ENCODE measurements at regions of chr17 and their contacts with region 1.

Region 1: GRCh38 chr17:70636517-70637133 is 467.3 kb downstream of the KCNJ2 start:
- DNase-seq: peak; percentile 7 to 23 (median 18)
- H3K4me3 ChIP-seq: no peak overlapping the region
- H3K4me3 Mint-ChIP-seq: no peak overlapping the region
- H3K27ac ChIP-seq: no peak overlapping the region
- H3K27ac Mint-ChIP-seq: no peak overlapping the region
- H3K4me1 ChIP-seq: no peaks in the 10 kb centered on the region
- H3K4me1 Mint-ChIP-seq: no peaks in the 10 kb centered on the region
- H3K27me3 ChIP-seq: peaks cover 0 to 3% of the 10 kb centered on the region in 2 donors
- H3K27me3 Mint-ChIP-seq: peaks cover 2 to 10% (median 8%) of the 10 kb centered on the region in 3 donors
- CTCF ChIP-seq: peak; percentile 88

Region 2: GRCh38 chr17:69575346-69575761 is 1061.3 kb before region 1 on chr17:
- intact Hi-C with region 1: loop called in 1 of 2 experiments (anchors 10 kb)
- DNase-seq: no peak
- H3K4me3 ChIP-seq: no peak overlapping the region
- H3K4me3 Mint-ChIP-seq: no peak overlapping the region
- H3K27ac ChIP-seq: no peak overlapping the region
- H3K27ac Mint-ChIP-seq: no peak overlapping the region
- H3K4me1 ChIP-seq: no peaks in the 10 kb centered on the region
- H3K4me1 Mint-ChIP-seq: no peaks in the 10 kb centered on the region
- H3K27me3 ChIP-seq: no peaks in the 10 kb centered on the region
- H3K27me3 Mint-ChIP-seq: peaks cover 4 to 7% (median 5%) of the 10 kb centered on the region in 3 donors
- CTCF ChIP-seq: no peak

Region 3: GRCh38 chr17:70829876-70830275 is 193.3 kb after region 1 on chr17:
- intact Hi-C with region 1: no loop called
- DNase-seq: no peak
- H3K4me3 ChIP-seq: no peak overlapping the region
- H3K4me3 Mint-ChIP-seq: no peak overlapping the region
- H3K27ac ChIP-seq: no peak overlapping the region
- H3K27ac Mint-ChIP-seq: no peak overlapping the region
- H3K4me1 ChIP-seq: no peaks in the 10 kb centered on the region
- H3K4me1 Mint-ChIP-seq: no peaks in the 10 kb centered on the region
- H3K27me3 ChIP-seq: no peaks in the 10 kb centered on the region
- H3K27me3 Mint-ChIP-seq: peaks cover 0 to 1% (median 0%) of the 10 kb centered on the region in 3 donors
- CTCF ChIP-seq: no peak

Region 4: DNA sequence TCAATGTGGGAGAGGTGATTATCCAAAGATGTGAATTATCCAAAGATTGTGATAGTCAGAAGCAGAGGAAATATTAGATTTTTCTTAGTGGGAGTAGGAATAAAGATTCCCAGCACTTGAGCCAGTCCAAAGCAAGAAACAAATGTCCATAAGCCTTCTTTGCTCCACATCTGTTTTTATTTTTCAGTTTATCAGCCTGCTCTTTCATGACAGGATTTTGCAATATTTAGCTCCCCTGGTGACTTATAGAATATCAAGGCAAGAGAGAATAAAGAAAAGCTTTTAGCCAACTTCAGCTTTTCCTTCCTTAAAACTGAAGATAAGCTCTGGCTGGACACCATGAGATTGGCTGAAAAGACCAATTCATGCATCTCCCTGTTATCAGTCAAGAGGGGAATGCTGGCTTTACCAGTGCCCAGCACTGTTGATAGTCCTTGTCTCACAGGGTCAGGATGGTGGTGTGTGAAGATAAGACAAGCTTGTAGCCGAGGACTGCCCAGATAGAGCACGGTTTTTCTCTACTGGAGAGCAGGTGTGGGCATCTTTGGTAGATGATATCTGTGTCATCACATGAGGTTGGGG is 239.2 kb after region 1 on chr17:
- intact Hi-C with region 1: no loop called
- DNase-seq: no peak
- H3K4me3 ChIP-seq: no peak overlapping the region
- H3K4me3 Mint-ChIP-seq: no peak overlapping the region
- H3K27ac ChIP-seq: no peak overlapping the region
- H3K27ac Mint-ChIP-seq: no peak overlapping the region
- H3K4me1 ChIP-seq: no peaks in the 10 kb centered on the region
- H3K4me1 Mint-ChIP-seq: no peaks in the 10 kb centered on the region
- H3K27me3 ChIP-seq: no peaks in the 10 kb centered on the region
- H3K27me3 Mint-ChIP-seq: no peaks in the 10 kb centered on the region
- CTCF ChIP-seq: no peak

Region 5: GRCh38 chr17:72539981-72540897 is 1903.6 kb after region 1 on chr17:
- intact Hi-C with region 1: loop called (anchors 5 kb)
- DNase-seq: peak; percentile 14 to 47 (median 22)
- H3K4me3 ChIP-seq: peak overlapping the region in 1 of 3 experiments; percentile 39
- H3K4me3 Mint-ChIP-seq: peak overlapping the region; percentile 53 to 87
- H3K27ac ChIP-seq: no peak overlapping the region
- H3K27ac Mint-ChIP-seq: no peak overlapping the region
- H3K4me1 ChIP-seq: no peaks in the 10 kb centered on the region
- H3K4me1 Mint-ChIP-seq: peaks cover 6% of the 10 kb centered on the region
- H3K27me3 ChIP-seq: peaks cover 3 to 12% of the 10 kb centered on the region in 2 donors
- H3K27me3 Mint-ChIP-seq: peaks cover 23 to 40% (median 27%) of the 10 kb centered on the region in 3 donors
- CTCF ChIP-seq: peak; percentile 85

Measured in CD14-positive monocyte (primary cell).